ENCODE measurements at regions of chr7 and their contacts with region 1.

Region 1: DNA sequence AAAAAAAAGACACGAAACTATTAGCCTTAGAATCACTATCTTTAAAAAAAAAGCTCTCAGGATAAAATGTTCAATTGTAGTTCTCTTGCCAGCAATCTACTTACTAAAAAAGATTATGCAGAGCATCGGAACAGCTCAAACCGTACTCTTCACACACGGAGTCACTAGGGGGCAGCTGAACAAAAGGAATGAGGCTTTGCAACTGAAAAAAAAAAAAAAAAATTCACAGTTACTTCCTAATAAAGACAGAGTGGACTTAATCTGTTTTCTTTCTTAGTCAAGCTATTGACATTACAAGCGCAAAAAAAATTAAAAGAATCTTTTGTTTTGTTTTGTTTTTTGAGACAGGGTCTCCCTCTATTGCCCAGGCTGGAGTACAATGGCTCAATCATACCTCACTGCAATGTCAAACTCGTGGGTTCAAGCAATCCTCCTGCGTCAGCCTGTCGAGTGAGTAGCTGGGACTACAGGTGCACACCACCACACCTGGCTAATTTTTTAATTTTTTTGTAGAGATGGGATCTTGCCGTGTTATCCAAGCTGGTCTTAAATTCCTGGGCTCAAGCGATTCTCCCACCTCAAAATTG is 11.5 kb downstream of the PMS2 start:
- DNase-seq: peak; percentile 57
- H3K4me3 Mint-ChIP-seq: no peak overlapping the region
- H3K27ac Mint-ChIP-seq: no peak overlapping the region
- H3K4me1 Mint-ChIP-seq: no peaks in the 10 kb centered on the region
- H3K27me3 Mint-ChIP-seq: no peaks in the 10 kb centered on the region

Region 2: GRCh38 chr7:6121141-6121540 is 123.8 kb after region 1 on chr7:
- CTCF ChIA-PET with region 1: no interaction called
- intact Hi-C with region 1: no loop called
- DNase-seq: no peak
- H3K4me3 Mint-ChIP-seq: no peak overlapping the region
- H3K27ac Mint-ChIP-seq: no peak overlapping the region
- H3K4me1 Mint-ChIP-seq: peaks cover 13% of the 10 kb centered on the region
- H3K27me3 Mint-ChIP-seq: no peaks in the 10 kb centered on the region

Region 3: DNA sequence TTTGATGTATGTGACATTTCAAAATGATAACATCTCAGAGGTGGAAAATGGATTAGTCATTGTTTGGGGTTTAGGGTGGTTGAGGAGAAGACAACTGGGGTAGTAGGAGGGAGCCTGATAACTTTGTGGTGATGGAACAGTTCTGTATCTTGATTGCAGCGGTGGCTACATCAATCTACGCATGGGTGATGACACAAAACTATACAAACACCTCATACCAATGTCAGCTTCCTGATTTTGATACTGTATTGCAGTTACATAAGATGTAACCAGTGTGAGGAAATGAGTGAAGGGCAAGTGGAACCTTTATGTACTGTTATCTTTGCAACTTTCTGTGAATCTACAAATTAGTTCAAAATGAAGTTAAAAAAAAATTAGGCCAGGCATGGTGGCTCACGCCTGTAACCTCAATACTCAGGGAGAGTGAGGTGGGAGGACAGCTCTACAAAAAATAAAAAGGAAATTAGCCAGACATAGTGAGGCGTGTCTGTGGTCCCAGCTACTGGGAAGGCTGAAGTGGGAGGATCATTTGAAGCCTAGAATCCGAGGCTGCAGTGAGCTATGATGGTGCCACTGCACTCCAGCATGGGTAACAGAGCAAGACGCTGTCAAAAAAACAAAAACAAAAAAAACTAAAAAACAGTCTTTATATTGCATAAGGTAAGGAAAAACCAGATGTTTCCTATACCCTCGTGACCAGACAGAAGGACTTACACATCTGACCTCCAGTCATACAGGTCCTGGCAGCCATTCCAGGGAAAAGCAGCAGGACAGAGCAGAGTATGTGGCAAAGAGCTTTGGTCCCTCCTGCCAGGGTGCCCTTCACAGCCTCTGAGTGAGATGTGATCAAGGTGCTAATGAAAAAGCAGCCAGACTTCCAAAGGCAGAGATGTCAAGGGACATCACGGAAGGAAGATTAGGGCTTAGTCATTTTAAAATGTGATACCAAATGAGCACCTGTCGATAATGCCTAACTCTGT is 224.3 kb after region 1 on chr7:
- CTCF ChIA-PET with region 1: no interaction called
- intact Hi-C with region 1: no loop called
- DNase-seq: peak; percentile 57
- H3K4me3 Mint-ChIP-seq: peak overlapping the region; percentile 3
- H3K27ac Mint-ChIP-seq: peak overlapping the region; percentile 55
- H3K4me1 Mint-ChIP-seq: peaks cover 17% of the 10 kb centered on the region
- H3K27me3 Mint-ChIP-seq: no peaks in the 10 kb centered on the region

Region 4: DNA sequence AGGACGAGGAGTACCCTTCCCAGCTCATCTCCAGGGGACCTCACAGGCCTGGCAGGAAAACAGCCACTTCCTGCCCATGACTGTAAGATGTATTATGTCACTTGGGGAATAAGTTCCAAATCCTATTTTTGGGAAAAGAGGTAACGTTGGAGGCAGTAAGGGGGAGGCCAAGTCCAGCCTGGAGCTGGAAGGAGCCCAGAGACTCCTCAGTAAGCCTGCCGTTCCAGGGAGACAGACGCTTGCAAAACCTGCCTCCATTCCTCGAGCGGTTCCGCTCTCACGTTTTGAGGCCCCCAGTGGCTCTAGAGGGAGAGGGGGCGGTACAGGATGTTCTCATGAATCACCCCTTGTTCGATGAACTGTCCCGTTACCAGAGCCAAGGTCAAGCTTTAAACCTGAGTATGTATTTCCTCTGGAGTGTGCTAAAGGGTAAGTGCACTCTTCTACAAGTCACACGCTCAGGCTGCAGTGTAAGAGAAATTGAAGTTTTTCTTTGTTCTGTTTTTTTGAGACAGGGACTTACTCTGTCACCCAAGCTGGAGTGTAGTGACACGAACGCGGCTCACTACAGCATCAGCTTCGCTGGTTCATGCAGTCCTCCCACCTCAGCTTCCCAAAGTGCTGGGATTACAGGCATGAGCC is 320.6 kb after region 1 on chr7:
- CTCF ChIA-PET with region 1: interaction called, 3 read pairs
- intact Hi-C with region 1: loop called (anchors 1 kb)
- DNase-seq: peak; percentile 35
- H3K4me3 Mint-ChIP-seq: no peak overlapping the region
- H3K27ac Mint-ChIP-seq: no peak overlapping the region
- H3K4me1 Mint-ChIP-seq: peaks cover 6% of the 10 kb centered on the region
- H3K27me3 Mint-ChIP-seq: no peaks in the 10 kb centered on the region

Measured in activated naive CD4-positive, alpha-beta T cell treated with anti-CD3 and anti-CD28 coated beads for 36 hours (primary cell).